ENCODE measurements at regions of chr17 and their contacts with region 1.

Region 1: GRCh38 chr17:55437159-55437605 is 15.5 kb upstream of the MMD start:
- DNase-seq: no peak
- ATAC-seq: no peak
- H3K4me3 Mint-ChIP-seq: no peak overlapping the region
- H3K27ac Mint-ChIP-seq: no peak overlapping the region
- H3K4me1 Mint-ChIP-seq: peaks cover 43% of the 10 kb centered on the region
- H3K27me3 Mint-ChIP-seq: peaks cover 16% of the 10 kb centered on the region

Region 2: DNA sequence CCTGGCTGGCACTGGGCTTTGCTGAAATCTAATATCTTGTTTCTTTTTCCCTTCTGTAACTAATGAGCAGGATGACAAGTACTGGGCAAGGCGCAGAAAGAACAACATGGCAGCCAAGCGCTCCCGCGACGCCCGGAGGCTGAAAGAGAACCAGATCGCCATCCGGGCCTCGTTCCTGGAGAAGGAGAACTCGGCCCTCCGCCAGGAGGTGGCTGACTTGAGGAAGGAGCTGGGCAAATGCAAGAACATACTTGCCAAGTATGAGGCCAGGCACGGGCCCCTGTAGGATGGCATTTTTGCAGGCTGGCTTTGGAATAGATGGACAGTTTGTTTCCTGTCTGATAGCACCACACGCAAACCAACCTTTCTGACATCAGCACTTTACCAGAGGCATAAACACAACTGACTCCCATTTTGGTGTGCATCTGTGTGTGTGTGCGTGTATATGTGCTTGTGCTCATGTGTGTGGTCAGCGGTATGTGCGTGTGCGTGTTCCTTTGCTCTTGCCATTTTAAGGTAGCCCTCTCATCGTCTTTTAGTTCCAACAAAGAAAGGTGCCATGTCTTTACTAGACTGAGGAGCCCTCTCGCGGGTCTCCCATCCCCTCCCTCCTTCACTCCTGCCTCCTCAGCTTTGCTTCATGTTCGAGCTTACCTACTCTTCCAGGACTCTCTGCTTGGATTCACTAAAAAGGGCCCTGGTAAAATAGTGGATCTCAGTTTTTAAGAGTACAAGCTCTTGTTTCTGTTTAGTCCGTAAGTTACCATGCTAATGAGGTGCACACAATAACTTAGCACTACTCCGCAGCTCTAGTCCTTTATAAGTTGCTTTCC is 116.4 kb before region 1 on chr17:
- CTCF ChIA-PET with region 1: no interaction called
- POLR2A ChIA-PET with region 1: no interaction called
- intact Hi-C with region 1: no loop called
- DNase-seq: no peak
- ATAC-seq: no peak
- H3K4me3 Mint-ChIP-seq: no peak overlapping the region
- H3K27ac Mint-ChIP-seq: no peak overlapping the region
- H3K4me1 Mint-ChIP-seq: no peaks in the 10 kb centered on the region
- H3K27me3 Mint-ChIP-seq: no peaks in the 10 kb centered on the region

Region 3: GRCh38 chr17:55458977-55459376 is 21.8 kb after region 1 on chr17:
- CTCF ChIA-PET with region 1: interaction called, 4 read pairs
- POLR2A ChIA-PET with region 1: no interaction called
- intact Hi-C with region 1: loop called in 1 of 2 experiments (anchors 1 kb)
- DNase-seq: peak; percentile 83
- ATAC-seq: peak; percentile 99
- H3K4me3 Mint-ChIP-seq: no peak overlapping the region
- H3K27ac Mint-ChIP-seq: no peak overlapping the region
- H3K4me1 Mint-ChIP-seq: peaks cover 24% of the 10 kb centered on the region
- H3K27me3 Mint-ChIP-seq: peaks cover 14% of the 10 kb centered on the region

Region 4: DNA sequence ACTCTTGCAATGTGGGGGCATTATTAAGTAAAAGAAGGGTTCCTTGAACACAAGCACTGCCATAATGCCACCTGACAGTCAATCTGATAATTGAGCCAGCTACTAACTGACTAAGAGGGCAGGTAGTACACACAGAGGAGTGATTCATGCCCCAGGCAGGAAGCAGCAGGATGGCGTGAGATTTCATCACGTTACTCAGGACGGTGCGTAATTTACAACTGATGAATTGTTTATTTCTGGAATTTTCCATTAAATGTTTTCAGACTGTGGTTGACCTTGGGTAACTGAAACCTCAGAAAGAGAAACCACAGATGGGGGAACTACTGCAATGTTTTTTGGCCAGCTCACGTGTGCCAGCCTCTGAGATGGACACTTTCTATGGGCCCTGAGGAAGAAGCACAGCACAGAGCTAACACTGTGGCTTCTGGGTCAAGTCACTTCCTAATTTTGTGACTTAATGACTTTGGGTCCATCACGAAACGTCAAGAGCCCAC is 1349.9 kb after region 1 on chr17:
- CTCF ChIA-PET with region 1: no interaction called
- POLR2A ChIA-PET with region 1: no interaction called
- intact Hi-C with region 1: loop called in 1 of 2 experiments (anchors 5 kb)
- DNase-seq: peak; percentile 82
- ATAC-seq: peak; percentile 98
- H3K4me3 Mint-ChIP-seq: peak overlapping the region; percentile 37
- H3K27ac Mint-ChIP-seq: peak overlapping the region; percentile 97
- H3K4me1 Mint-ChIP-seq: peaks cover 34% of the 10 kb centered on the region
- H3K27me3 Mint-ChIP-seq: peaks cover 1% of the 10 kb centered on the region

Measured in activated CD4-positive, alpha-beta T cell treated with anti-CD3 and anti-CD28 coated beads for 36 hours (primary cell).